Endothelial cell of umbilical vein (primary cell): ENCODE measurements at regions of chr2 and their contacts with region 1.

Region 1: GRCh38 chr2:137964066-137964858 is at the start of gene HNMT:
- DNase-seq: peak; percentile 84
- H3K4me3 ChIP-seq: peak within 1 kb of the TSS; percentile 13 to 59 (median 55)
- H3K27ac ChIP-seq: peak within 1 kb of the TSS; percentile 64
- H3K4me1 ChIP-seq: peaks cover 48% of the 10 kb centered on the region
- H3K27me3 ChIP-seq: no peaks in the 10 kb centered on the region
- CTCF ChIP-seq: no peak
- POLR2A ChIP-seq: peak; percentile 32
- total RNA-seq, gene HNMT: 13.4 and 16.9 TPM in 2 replicates

Region 2: DNA sequence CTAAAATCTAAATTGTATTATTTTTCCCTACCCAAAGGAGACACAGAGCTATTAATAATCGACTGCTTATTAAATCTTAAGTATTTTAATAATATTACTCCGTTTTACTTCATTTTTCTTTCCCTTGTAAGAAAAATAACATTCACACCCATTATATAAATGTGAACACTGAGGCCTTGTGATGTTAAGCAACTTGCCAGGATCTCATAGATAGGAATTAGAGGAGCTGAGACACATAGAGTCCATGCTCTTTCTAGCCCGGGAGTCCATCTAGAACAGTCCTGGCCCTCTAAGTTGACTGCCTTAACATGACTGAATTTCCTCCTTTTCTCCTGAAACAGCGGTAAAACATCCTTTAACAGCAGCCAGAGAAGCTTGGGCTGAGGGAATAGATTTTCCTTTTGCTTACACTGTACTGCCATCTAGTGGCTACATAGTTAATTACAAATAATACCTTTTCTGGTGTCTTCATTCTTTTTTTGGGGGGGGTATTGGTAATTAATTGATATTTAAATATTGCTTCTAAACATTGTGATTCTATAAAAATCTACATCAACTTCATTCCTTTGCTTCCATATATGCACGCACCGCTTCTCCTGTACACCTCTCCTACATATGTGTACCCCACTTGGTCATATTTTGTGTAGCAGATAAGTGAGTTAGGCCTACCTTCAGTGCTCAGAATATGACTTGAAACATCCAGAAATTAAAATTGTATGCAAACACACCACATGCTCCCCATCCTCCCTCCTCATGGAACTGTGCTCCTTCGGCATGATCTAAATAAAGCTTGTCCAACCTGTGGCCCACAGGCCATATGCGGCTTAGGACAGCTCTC is 125.8 kb before region 1 on chr2:
- CTCF ChIA-PET with region 1: no interaction called
- POLR2A ChIA-PET with region 1: no interaction called
- dilution Hi-C with region 1: no loop called
- intact Hi-C with region 1: no loop called
- DNase-seq: peak; percentile 50
- H3K4me3 ChIP-seq: no peak overlapping the region
- H3K27ac ChIP-seq: no peak overlapping the region
- H3K4me1 ChIP-seq: no peaks in the 10 kb centered on the region
- H3K27me3 ChIP-seq: no peaks in the 10 kb centered on the region
- CTCF ChIP-seq: peak; percentile 18 to 33
- POLR2A ChIP-seq: no peak

Region 3: GRCh38 chr2:137947728-137948336 is 16.4 kb before region 1 on chr2:
- CTCF ChIA-PET with region 1: interaction called, 11 read pairs
- POLR2A ChIA-PET with region 1: no interaction called
- dilution Hi-C with region 1: no loop called
- intact Hi-C with region 1: no loop called
- DNase-seq: peak; percentile 82
- H3K4me3 ChIP-seq: no peak overlapping the region
- H3K27ac ChIP-seq: no peak overlapping the region
- H3K4me1 ChIP-seq: no peaks in the 10 kb centered on the region
- H3K27me3 ChIP-seq: no peaks in the 10 kb centered on the region
- CTCF ChIP-seq: peak; percentile 45 to 62
- POLR2A ChIP-seq: no peak

Region 4: GRCh38 chr2:138060301-138060635 is 96.0 kb after region 1 on chr2:
- CTCF ChIA-PET with region 1: interaction called, 3 read pairs
- POLR2A ChIA-PET with region 1: no interaction called
- dilution Hi-C with region 1: no loop called
- intact Hi-C with region 1: loop called (anchors 1 kb)
- DNase-seq: peak; percentile 83
- H3K4me3 ChIP-seq: no peak overlapping the region
- H3K27ac ChIP-seq: no peak overlapping the region
- H3K4me1 ChIP-seq: peaks cover 10% of the 10 kb centered on the region
- H3K27me3 ChIP-seq: no peaks in the 10 kb centered on the region
- CTCF ChIP-seq: no peak
- POLR2A ChIP-seq: no peak

Region 5: GRCh38 chr2:138267161-138267901 is 303.1 kb after region 1 on chr2:
- CTCF ChIA-PET with region 1: no interaction called
- POLR2A ChIA-PET with region 1: no interaction called
- dilution Hi-C with region 1: no loop called
- intact Hi-C with region 1: loop called (anchors 5 kb)
- DNase-seq: peak; percentile 79
- H3K4me3 ChIP-seq: peak overlapping the region in 1 of 3 experiments; percentile 22
- H3K27ac ChIP-seq: peak overlapping the region; percentile 97
- H3K4me1 ChIP-seq: peaks cover 23% of the 10 kb centered on the region
- H3K27me3 ChIP-seq: no peaks in the 10 kb centered on the region
- CTCF ChIP-seq: no peak
- POLR2A ChIP-seq: no peak